Stomach (tissue), 19 donors: ENCODE measurements at regions of chr2 and their contacts with region 1.

Region 1: GRCh38 chr2:100984892-100985379 is 17.2 kb upstream of the RPL31 start:
- DNase-seq: peak; percentile 80 to 92
- H3K4me3 ChIP-seq: no peak overlapping the region
- H3K27ac ChIP-seq: peak overlapping the region in 1 of 5 donors; percentile 34
- H3K4me1 ChIP-seq: peaks cover 0 to 11% (median 0%) of the 10 kb centered on the region in 4 donors
- H3K27me3 ChIP-seq: no peaks in the 10 kb centered on the region
- CTCF ChIP-seq: peak in 6 of 7 experiments; percentile 72 to 95 (median 86)
- EP300 ChIP-seq: no peak
- POLR2A ChIP-seq: peak in 1 of 4 donors; percentile 10

Region 2: GRCh38 chr2:100610381-100610831 is 374.5 kb before region 1 on chr2:
- intact Hi-C with region 1: loop called (anchors 5 kb)
- DNase-seq: peak; percentile 58 to 88
- H3K4me3 ChIP-seq: no peak overlapping the region
- H3K27ac ChIP-seq: no peak overlapping the region
- H3K4me1 ChIP-seq: peaks cover 0 to 9% (median 0%) of the 10 kb centered on the region in 4 donors
- H3K27me3 ChIP-seq: peaks cover 0 to 7% (median 0%) of the 10 kb centered on the region in 3 donors
- CTCF ChIP-seq: peak in 3 of 7 experiments; percentile 28 to 42 (median 35)
- EP300 ChIP-seq: no peak
- POLR2A ChIP-seq: no peak

Region 3: DNA sequence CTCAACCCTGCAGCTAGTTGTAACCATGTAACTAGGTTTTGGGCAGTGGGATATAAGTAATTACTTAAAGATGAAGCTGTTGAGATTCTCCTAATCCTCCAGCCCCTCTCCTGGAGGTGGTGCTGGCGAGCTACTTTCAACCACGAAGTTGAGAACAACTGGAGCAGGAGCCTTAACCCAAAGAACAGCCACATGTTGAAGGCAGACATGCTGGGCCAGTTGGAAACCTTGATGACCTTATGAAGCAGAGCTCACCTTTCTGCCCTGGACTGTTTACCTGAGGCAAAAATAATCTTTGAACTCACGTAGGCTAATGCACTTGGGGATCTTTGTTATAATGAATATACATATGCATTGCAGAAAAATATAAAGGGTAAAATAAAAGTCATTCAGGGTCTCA is 254.6 kb before region 1 on chr2:
- intact Hi-C with region 1: loop called (anchors 5 kb)
- DNase-seq: peak; percentile 73 to 74
- H3K4me3 ChIP-seq: no peak overlapping the region
- H3K27ac ChIP-seq: no peak overlapping the region
- H3K4me1 ChIP-seq: no peaks in the 10 kb centered on the region
- H3K27me3 ChIP-seq: no peaks in the 10 kb centered on the region
- CTCF ChIP-seq: peak in 5 of 7 experiments; percentile 36 to 68 (median 65)
- EP300 ChIP-seq: no peak
- POLR2A ChIP-seq: no peak

Region 4: GRCh38 chr2:102313025-102313424 is 1328.1 kb after region 1 on chr2:
- intact Hi-C with region 1: no loop called
- DNase-seq: no peak
- H3K4me3 ChIP-seq: no peak overlapping the region
- H3K27ac ChIP-seq: no peak overlapping the region
- H3K4me1 ChIP-seq: no peaks in the 10 kb centered on the region
- H3K27me3 ChIP-seq: peaks cover 0 to 4% (median 0%) of the 10 kb centered on the region in 3 donors
- CTCF ChIP-seq: no peak
- EP300 ChIP-seq: no peak
- POLR2A ChIP-seq: no peak